ENCODE measurements at regions of chr11 and their contacts with region 1.

Region 1: GRCh38 chr11:98955551-98955950 is 65.2 kb upstream of the CNTN5 start:
- DNase-seq: no peak
- H3K4me3 ChIP-seq: no peak overlapping the region
- H3K27ac ChIP-seq: no peak overlapping the region
- H3K4me1 ChIP-seq: no peaks in the 10 kb centered on the region
- H3K27me3 ChIP-seq: no peaks in the 10 kb centered on the region
- CTCF ChIP-seq: no peak
- EP300 ChIP-seq: no peak
- POLR2A ChIP-seq: no peak

Region 2: GRCh38 chr11:98659431-98659830 is 296.1 kb before region 1 on chr11:
- in situ Hi-C with region 1: no loop called
- intact Hi-C with region 1: loop called (anchors 10 kb)
- DNase-seq: no peak
- H3K4me3 ChIP-seq: no peak overlapping the region
- H3K27ac ChIP-seq: no peak overlapping the region
- H3K4me1 ChIP-seq: no peaks in the 10 kb centered on the region
- H3K27me3 ChIP-seq: no peaks in the 10 kb centered on the region
- CTCF ChIP-seq: no peak
- EP300 ChIP-seq: no peak
- POLR2A ChIP-seq: no peak